ENCODE measurements at regions of chr5 and their contacts with region 1.

Region 1: DNA sequence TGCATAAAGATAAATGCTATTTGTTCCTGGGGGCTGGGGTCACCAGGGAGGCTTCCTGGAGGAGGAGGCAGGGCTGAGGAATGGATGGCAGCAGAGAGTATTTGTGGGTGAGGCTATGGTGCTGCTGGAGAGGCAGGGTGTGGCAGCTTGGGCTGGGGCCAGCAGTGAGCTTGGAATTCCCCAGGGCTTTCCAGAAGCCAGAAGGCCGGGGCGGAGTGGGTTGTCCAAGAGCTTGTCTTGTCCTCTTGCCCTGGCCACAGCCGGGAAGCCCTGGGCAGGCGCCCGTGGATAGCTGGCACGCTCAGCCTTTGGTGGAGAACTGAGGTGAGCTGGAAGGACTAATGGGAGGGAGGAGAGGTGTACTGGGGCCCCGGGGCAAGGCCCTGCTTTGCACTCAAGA is 27.1 kb upstream of the CNOT6 start:
- DNase-seq: no peak

Region 2: DNA sequence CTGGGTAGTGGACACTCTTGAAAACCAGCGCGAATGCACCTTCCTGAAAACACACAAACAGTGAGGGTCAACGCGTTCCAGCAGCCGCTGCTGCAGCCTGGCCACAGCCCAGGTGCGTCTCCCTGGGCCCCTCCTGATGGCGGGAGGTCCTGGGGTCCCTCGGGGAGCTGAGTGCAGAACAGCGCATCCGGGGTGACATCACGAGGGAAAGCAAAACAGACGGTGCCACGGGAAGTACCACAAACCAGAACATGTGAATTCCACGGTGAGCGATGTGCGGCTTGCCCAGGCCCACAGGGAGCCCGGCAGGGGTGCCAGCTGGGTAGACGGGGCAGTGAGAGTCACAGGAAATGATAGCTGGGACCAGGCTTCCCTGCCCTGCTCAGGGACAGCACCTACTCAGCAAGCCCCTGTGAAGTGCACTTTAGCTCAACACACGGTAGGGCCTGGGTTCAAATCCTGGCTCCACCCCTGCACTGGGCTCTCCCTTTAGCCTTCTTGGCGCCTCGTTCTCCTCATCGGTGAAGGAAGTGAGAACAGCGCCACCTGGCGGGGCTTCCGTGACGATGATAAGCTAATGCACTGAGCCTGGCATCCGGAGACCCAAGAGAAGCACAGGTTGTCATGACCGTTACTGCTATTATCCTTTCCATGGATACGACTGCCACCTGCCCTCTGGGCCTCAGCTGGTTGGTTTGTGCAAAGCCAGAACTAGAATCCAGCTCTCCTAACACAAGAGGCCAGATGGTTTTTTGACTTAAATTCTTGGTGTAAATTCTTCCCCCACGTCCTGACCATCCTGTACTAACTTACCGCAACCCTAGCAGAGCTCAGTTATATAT is 138.5 kb before region 1 on chr5:
- in situ Hi-C with region 1: loop called (anchors 5 kb)
- DNase-seq: peak; percentile 78

Region 3: GRCh38 chr5:180399401-180400215 is 67.4 kb before region 1 on chr5:
- in situ Hi-C with region 1: no loop called
- DNase-seq: no peak

Measured in G401 (cell line).